ENCODE measurements at regions of chr17 and their contacts with region 1.

Region 1: GRCh38 chr17:18946531-18946930 is 5.4 kb upstream of the SLC5A10 start:
- DNase-seq: no peak
- H3K4me3 ChIP-seq: no peak overlapping the region
- H3K27ac ChIP-seq: no peak overlapping the region
- H3K4me1 ChIP-seq: peaks cover 0 to 5% (median 0%) of the 10 kb centered on the region in 6 donors
- H3K27me3 ChIP-seq: peaks cover 0 to 43% (median 0%) of the 10 kb centered on the region in 7 donors
- CTCF ChIP-seq: no peak
- POLR2A ChIP-seq: no peak

Region 2: GRCh38 chr17:19019036-19019941 is 72.8 kb after region 1 on chr17:
- intact Hi-C with region 1: loop called (anchors 10 kb)
- DNase-seq: peak; percentile 75
- H3K4me3 ChIP-seq: no peak overlapping the region
- H3K27ac ChIP-seq: no peak overlapping the region
- H3K4me1 ChIP-seq: peaks cover 0 to 7% (median 0%) of the 10 kb centered on the region in 6 donors
- H3K27me3 ChIP-seq: peaks cover 0 to 16% (median 0%) of the 10 kb centered on the region in 7 donors
- CTCF ChIP-seq: no peak
- POLR2A ChIP-seq: no peak

Measured in spleen (tissue), 13 donors.